Posterior cingulate gyrus (tissue), 11 donors: ENCODE measurements at regions of chr2 and their contacts with region 1.

Region 1: DNA sequence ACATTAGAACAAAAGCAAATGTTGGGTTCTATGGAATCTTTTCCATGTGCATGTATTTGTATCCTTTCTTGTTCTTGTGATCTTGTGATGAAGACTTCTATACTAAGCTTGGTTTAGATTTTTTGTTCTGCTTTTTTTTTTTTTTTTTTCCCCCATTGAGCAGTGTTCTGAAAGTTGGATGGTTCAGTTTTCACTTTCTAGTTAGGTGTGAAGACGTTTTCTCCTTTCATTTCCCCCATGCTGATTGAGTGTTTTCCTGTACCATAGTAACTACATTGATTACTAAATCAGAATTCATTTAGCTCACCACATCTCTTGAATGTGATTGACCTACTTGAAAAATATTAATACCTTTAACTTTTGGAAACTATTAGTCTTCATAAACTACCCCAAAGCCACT is 34.1 kb downstream of the NOP58 start:
- DNase-seq: no peak

Region 2: DNA sequence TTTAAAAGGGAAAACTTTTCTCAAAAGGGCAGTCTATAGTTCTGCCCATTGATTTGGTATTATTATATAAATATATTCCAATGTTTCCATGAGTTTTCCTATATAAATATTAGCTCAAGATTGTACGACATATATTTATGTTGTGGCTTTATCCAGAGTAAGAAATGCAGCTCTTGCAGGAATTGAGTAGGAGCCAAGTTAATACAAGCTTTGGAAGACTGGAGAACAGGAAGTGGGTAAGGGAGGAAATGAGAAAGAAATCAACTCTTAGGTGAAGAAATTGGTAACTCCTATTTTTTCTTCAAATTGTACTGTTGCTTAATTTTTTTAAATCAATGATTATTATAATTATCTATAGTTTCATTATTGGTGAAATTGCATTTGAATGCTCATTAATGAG is 229.7 kb after region 1 on chr2:
- intact Hi-C with region 1: loop called (anchors 10 kb)
- DNase-seq: no peak

Region 3: GRCh38 chr2:202801544-202801943 is 501.8 kb after region 1 on chr2:
- intact Hi-C with region 1: no loop called
- DNase-seq: no peak